ENCODE measurements at regions of chr22 and their contacts with region 1.

Region 1: DNA sequence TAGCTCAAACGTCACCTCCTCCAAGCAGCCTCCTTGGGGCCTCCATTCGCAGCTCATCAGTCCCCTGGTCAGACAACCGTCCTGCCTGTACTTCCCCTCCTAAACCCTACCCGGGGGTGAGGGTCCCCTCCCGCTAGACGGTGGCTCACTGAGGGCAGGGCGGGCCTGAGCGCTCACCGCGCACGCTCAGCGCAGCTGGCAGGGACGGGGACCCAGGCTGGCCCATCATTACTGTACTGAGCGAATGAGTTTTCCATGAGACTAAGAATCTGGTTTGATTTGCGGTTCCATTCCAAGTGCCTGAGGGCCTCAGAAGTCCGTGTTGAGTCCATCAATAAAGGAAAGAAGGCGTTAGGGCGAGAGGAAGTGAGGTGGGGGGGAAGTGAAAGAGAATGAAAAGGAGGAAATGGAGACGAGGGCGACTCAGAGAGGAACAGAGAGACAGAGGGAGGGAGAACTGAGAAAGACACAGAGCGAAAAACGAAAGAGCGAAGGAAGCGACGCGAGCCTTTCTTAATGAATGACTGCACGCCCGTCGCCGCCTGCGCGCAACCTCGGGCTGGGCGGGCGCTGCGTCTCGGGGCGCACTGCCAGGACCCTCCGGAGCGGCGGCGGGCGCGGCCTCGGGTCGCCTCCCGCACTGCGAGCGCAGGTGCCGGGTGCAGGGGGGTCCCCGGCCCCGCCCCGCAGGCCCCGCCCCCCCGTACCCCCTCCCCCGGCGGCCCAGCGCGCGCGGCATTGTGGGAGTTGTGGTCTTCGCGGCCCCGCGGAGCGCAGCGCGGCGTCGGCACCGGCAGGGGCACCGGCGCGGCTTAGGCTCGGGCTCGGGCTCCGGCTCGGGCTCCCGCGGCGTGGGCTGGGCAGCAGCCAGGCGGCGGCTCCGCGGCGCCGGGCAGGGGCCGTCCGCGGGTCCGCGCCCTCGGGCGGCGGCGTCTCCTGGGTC is at the start of gene ASPHD2:
- DNase-seq: peak; percentile 89
- total RNA-seq, gene ASPHD2: 0.56 to 0.67 TPM

Region 2: DNA sequence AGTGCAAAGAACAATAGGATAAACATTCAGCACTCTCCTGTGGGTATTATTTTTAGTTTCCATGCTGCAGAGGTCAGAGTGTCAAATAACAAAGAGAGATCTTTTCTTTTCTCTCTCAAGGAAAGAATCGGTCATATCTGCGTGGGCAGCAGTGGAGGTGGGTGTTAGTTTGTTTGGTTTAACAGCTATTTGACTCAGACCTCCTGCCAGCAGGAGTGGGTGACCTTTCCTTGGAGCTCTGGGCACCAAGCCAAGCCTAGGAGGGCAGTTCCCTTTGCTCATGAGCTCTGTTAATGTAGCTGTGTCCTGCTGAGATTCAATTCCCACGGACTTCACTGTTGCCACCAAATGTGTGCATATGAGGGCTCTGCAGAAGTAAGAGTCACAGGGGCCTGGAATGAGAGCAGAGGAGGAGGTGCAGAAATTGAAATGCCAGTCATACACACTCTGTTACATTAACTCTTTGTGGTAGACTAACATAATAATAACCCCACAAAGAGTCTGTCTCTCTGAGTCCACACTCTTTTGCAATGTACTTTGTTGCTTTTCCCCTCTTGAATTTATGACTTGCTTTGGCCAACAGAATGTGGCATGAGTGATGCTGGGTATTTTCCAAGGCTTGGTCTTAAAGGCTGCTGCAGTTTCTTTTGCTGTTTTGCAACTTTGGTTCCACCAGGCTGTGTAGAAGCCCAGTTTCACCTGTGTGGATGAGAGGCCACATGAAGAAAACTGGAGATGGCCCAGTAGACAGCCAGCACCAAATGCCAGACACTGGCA is 940.4 kb before region 1 on chr22:
- intact Hi-C with region 1: loop called in 1 of 2 experiments (anchors 5 kb)
- DNase-seq: peak; percentile 83

Region 3: GRCh38 chr22:26398741-26399153 is 30.0 kb before region 1 on chr22:
- intact Hi-C with region 1: no loop called
- DNase-seq: peak; percentile 82

Region 4: GRCh38 chr22:27063406-27063805 is 634.6 kb after region 1 on chr22:
- intact Hi-C with region 1: no loop called
- DNase-seq: no peak

Measured in posterior vena cava (tissue), 2 donors.